AG04449 (cell line): ENCODE measurements at regions of chr9 and their contacts with region 1.

Region 1: GRCh38 chr9:36597412-36598178 is 24.9 kb downstream of the MELK start:
- DNase-seq: no peak
- H3K4me3 ChIP-seq: no peak overlapping the region
- CTCF ChIP-seq: peak; percentile 66

Region 2: GRCh38 chr9:36328798-36329411 is 268.7 kb before region 1 on chr9:
- CTCF ChIA-PET with region 1: no interaction called
- POLR2A ChIA-PET with region 1: no interaction called
- DNase-seq: peak; percentile 31
- H3K4me3 ChIP-seq: no peak overlapping the region
- CTCF ChIP-seq: peak; percentile 49

Region 3: GRCh38 chr9:36584622-36585470 is 12.7 kb before region 1 on chr9:
- CTCF ChIA-PET with region 1: interaction called, 28 read pairs
- POLR2A ChIA-PET with region 1: interaction called, 8 read pairs
- DNase-seq: no peak
- H3K4me3 ChIP-seq: no peak overlapping the region
- CTCF ChIP-seq: no peak

Region 4: GRCh38 chr9:36612946-36613345 is 15.4 kb after region 1 on chr9:
- CTCF ChIA-PET with region 1: interaction called, 20 read pairs
- POLR2A ChIA-PET with region 1: no interaction called
- DNase-seq: no peak
- H3K4me3 ChIP-seq: no peak overlapping the region
- CTCF ChIP-seq: no peak

Region 5: DNA sequence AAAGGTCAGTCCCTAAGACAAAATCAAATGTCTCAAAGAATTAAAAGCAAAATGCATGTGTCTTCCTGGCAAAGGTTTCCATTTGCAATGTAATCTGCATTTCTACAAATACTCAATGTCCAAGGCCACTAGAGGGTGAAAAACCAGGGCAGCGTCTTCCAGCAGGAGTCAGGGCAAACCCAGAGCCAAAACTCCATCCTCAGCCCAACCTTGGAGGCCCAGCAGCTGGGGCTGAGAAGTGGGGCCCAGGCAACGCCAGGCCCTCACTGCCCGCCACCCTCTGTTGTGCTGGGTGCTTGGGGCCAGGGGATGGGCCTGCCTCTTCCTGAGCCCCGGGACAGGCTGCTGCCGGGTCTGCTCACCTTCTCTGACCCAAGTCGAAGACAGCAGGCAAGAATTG is 236.4 kb after region 1 on chr9:
- CTCF ChIA-PET with region 1: no interaction called
- POLR2A ChIA-PET with region 1: no interaction called
- DNase-seq: no peak
- H3K4me3 ChIP-seq: no peak overlapping the region
- CTCF ChIP-seq: no peak

Region 6: DNA sequence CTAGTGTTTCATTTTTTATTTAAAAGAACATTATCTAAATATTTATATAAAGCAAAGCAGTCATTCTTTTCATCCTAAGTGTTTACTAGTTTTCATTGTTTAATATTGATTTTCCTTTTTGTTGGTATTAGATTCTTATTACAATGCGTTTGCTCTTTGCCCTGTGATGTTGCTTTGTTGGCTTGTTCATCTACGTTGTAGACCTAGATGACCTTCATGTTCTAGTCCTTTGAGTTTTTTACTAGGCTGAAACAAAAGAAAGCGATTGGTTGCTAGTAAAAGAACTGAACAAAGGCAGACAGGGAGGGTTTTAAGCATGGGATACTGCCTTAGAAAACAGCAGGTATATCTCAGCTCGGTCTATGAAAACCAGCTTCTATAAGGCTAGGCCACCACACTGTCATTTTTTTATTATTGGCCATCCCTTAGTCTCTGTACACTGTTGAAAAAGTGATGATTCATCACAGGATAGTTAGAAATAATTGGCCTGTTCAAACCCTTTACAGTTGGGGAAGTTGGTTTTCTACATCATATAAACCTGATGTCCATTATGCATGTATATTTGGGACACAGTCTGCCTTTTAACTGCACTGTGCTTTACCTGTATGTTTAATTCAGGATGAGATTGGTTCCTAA is 641.7 kb after region 1 on chr9:
- CTCF ChIA-PET with region 1: no interaction called
- POLR2A ChIA-PET with region 1: no interaction called
- DNase-seq: no peak
- H3K4me3 ChIP-seq: no peak overlapping the region
- CTCF ChIP-seq: no peak